Dorsolateral prefrontal cortex (tissue), 120 donors: ENCODE measurements at regions of chr7 and their contacts with region 1.

Region 1: DNA sequence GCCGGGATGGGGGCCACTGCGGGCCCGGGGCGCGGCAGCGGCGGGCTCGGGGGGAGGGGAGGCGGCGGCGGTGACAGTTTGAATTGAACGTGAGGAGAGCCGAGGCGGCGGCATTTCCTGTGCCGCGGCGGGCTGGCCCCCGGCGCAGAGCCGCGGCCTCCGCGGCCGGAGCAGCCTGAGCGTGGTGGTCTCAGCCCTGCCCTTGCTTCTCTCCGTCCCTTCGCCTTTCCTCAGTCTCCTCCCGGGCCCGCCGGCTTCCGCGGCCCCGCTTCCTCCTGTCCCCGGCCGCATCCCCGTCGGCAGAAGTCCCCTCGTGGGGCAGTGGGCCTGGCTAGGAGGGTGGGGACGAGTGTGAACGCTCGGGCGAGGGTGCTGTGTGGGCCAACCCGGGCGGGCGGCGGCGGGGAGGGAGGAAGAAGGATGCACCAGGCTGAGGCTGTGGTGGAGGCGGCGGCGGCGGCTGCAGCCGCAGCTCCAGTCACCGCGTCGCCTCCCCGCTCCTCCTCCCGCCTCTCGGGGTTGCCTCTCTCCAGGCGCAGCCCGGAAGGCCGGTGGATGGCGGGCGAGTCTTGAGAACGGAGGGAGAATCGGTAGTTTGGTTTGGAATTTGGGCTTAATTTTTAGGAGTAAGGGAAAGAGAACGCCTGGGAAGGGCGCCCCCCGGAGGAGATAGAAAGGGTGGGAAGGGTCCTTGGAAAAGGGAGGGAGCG is 690 bp downstream of the SEPTIN7 start:
- DNase-seq: peak; percentile 61 to 84 (median 72)
- H3K4me3 ChIP-seq: peak overlapping the region; percentile 70 to 97 (median 90)
- H3K27ac ChIP-seq: peak overlapping the region; percentile 90 to 100 (median 99)
- H3K27me3 ChIP-seq: no peaks in the 10 kb centered on the region
- CTCF ChIP-seq: peak; percentile 41 to 85 (median 72)

Region 2: GRCh38 chr7:35694781-35695472 is 106.6 kb before region 1 on chr7 and contains the start of gene HERPUD2:
- intact Hi-C with region 1: no loop called
- DNase-seq: peak; percentile 92 to 96 (median 94)
- H3K4me3 ChIP-seq: peak within 1 kb of the TSS; percentile 67 to 100 (median 94)
- H3K27ac ChIP-seq: peak within 1 kb of the TSS; percentile 36 to 98 (median 93)
- H3K27me3 ChIP-seq: no peaks in the 10 kb centered on the region
- CTCF ChIP-seq: peak in 35 of 56 donors; percentile 2 to 62 (median 37)
- total RNA-seq, gene HERPUD2: 24.1 to 66.9 (median 36.4) TPM

Region 3: GRCh38 chr7:35716038-35716803 is 85.3 kb before region 1 on chr7:
- intact Hi-C with region 1: loop called (anchors 2 to 5 kb)
- DNase-seq: peak in 9 of 10 donors; percentile 62 to 86 (median 71)
- H3K4me3 ChIP-seq: peak overlapping the region; percentile 11 to 73 (median 47)
- H3K27ac ChIP-seq: peak overlapping the region; percentile 69 to 98 (median 93)
- H3K27me3 ChIP-seq: no peaks in the 10 kb centered on the region
- CTCF ChIP-seq: peak in 3 of 56 donors; percentile 3 to 7 (median 5)

Region 4: DNA sequence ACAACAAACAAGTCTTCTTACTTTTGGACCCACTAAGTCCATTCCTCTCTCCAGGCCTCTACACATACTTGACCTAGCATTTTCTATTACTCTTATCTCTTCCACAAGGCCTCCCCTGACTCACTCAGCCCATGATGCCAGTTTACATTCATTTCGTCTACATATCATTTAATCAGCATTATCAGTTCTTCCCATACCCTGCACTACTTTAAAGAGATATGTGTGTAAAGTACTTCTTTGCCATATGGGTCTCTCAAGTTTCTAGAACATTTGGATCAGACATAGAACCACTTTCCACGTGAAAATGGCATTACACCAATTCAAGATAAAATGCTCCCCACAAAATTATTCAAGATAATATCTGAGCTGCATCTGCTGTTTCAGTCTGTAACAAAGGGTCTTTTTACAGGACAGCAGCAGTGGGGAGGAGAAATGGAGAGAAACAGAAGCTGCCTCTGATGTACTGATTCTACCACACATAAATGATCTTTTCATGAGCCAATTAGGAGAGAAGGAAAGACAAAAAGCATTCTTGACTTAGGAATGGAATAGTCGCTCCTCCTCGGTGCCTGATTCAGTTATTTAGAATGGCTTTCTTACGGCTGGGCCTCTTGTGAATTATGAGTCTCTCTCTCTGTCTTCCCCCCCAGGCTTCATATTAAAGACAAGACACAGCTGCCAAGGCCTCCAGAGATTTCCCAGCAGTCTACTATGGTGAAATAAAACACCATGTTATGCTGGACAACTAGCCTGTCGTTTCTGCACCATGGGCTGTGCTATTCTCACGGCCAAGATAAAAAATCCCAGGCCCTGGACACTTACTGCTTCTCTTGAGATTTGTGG is 47.6 kb before region 1 on chr7:
- intact Hi-C with region 1: loop called in 1 of 2 experiments (anchors 1 kb)
- DNase-seq: no peak
- H3K4me3 ChIP-seq: peak overlapping the region in 10 of 59 donors; percentile 2 to 30 (median 12)
- H3K27ac ChIP-seq: peak overlapping the region; percentile 43 to 99 (median 94)
- H3K27me3 ChIP-seq: no peaks in the 10 kb centered on the region
- CTCF ChIP-seq: peak in 2 of 56 donors; percentile 6 to 16

Region 5: GRCh38 chr7:35781200-35781701 is 20.3 kb before region 1 on chr7:
- intact Hi-C with region 1: loop called in 1 of 2 experiments (anchors 2 kb)
- DNase-seq: peak in 2 of 10 donors; percentile 44 to 70
- H3K4me3 ChIP-seq: peak overlapping the region in 14 of 59 donors; percentile 0 to 43 (median 18)
- H3K27ac ChIP-seq: peak overlapping the region; percentile 1 to 99 (median 93)
- H3K27me3 ChIP-seq: no peaks in the 10 kb centered on the region
- CTCF ChIP-seq: peak in 1 of 56 donors; percentile 7

Region 6: DNA sequence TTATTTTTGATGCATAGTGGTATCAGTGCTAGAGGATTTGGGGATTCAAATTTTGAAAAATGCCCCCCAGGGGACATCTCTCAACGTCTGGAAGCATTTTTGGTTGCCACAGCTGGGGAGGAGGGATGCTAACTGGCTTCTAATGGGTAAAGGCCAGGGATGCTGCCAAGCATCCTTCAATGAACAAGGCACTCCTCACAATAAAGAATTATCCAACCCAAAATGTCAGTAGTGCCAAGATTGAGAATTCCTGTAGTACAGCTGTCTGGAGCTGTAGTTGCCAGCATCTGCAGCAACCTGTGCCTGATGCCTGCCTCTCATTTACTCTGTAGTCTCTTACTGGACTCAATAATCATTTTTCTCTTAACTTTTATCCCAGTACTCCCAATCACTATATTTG is 52.8 kb after region 1 on chr7:
- intact Hi-C with region 1: loop called in 1 of 2 experiments (anchors 5 kb)
- DNase-seq: peak in 4 of 10 donors; percentile 5 to 61 (median 49)
- H3K4me3 ChIP-seq: no peak overlapping the region
- H3K27ac ChIP-seq: peak overlapping the region in 41 of 59 donors; percentile 1 to 76 (median 39)
- H3K27me3 ChIP-seq: no peaks in the 10 kb centered on the region
- CTCF ChIP-seq: peak in 2 of 56 donors; percentile 12 to 20

Region 7: GRCh38 chr7:35900651-35901050 is 99.1 kb after region 1 on chr7:
- intact Hi-C with region 1: loop called (anchors 2 to 10 kb)
- DNase-seq: no peak
- H3K4me3 ChIP-seq: no peak overlapping the region
- H3K27ac ChIP-seq: peak overlapping the region in 25 of 59 donors; percentile 0 to 83 (median 27)
- H3K27me3 ChIP-seq: no peaks in the 10 kb centered on the region
- CTCF ChIP-seq: no peak

Region 8: DNA sequence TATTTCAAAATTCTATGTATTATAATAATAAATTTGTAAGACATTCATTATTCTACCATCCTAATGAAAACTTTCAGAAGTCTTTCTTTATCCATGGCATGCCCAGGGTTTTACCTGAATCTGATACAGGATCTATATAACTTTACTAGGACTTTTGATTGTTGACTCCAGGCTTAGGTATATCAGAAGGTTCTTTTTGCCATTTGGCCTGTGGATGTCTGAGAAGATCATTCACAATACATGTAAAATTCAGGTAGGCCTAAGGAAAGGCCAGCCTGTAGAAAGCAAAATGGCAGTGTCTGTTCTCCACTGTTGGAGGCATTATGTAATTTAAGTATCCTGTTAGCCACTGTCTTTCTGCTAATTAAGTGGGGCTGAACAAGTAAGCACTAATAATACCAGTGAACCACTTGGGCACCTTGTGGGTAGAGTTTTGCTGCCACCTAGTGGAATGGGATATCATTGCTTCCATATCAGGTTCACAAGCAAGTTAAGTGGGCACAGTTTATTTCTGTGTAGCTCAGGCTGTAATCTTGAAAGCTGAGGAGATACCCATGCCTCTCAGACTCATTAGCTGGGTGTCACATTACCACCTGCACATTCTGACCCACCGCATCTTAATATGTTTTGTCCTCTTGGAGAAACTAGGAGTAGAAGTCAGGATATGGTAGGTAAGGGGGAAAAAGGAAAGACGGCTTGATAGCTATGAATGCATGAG is 104.8 kb after region 1 on chr7:
- intact Hi-C with region 1: loop called (anchors 2 to 10 kb)
- DNase-seq: peak in 4 of 10 donors; percentile 50 to 75 (median 72)
- H3K4me3 ChIP-seq: no peak overlapping the region
- H3K27ac ChIP-seq: peak overlapping the region in 58 of 59 donors; percentile 17 to 90 (median 79)
- H3K27me3 ChIP-seq: no peaks in the 10 kb centered on the region
- CTCF ChIP-seq: peak; percentile 82 to 99 (median 94)

Region 9: GRCh38 chr7:36075561-36075960 is 274.0 kb after region 1 on chr7:
- intact Hi-C with region 1: no loop called
- DNase-seq: no peak
- H3K4me3 ChIP-seq: no peak overlapping the region
- H3K27ac ChIP-seq: no peak overlapping the region
- H3K27me3 ChIP-seq: no peaks in the 10 kb centered on the region
- CTCF ChIP-seq: no peak